GM10248 (cell line): ENCODE measurements at regions of chr1 and their contacts with region 1.

Region 1: GRCh38 chr1:37602750-37603694 is 7.3 kb upstream of the GNL2 start:
- DNase-seq: peak; percentile 72
- CTCF ChIP-seq: peak; percentile 61

Region 2: DNA sequence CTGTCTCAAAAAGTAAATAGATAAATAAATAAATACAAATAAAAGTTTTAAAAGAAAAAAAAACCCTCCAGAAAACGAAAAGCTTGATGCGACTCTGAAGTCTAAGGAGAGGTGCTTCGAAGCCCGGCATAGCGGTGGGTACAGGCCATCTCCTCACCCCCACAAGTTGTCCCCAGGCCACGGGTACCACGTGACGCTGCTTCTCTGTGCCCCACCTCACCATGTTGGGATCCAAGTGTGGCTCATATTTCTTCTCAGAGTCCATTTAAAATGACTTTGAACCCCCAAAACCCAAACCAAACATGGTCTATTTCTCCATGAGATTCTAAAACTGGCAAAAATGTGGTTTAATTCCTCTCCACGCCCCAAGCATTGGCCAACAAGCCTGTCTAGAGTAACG is 161.5 kb before region 1 on chr1:
- CTCF ChIA-PET with region 1: no interaction called
- POLR2A ChIA-PET with region 1: no interaction called
- DNase-seq: no peak
- CTCF ChIP-seq: no peak

Region 3: DNA sequence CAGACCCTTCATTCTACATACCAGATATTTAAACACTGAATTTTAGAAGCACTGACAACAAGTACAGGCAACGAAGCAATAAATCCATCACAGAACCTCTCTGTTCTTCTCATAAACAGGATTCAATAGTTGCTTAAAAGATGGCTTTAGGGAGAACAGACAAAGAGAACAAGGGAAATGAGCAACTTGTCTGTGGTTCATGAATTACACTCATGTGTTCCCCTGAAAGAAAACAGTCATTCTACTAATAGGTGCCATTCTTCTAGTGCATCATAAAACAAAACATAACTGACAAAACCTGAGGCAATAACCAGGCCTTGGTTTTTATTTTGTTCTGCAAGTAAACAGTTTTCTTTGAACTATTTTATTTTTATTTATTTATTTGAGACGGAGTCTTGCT is 14.1 kb before region 1 on chr1:
- CTCF ChIA-PET with region 1: interaction called, 11 read pairs
- POLR2A ChIA-PET with region 1: no interaction called
- DNase-seq: no peak
- CTCF ChIP-seq: no peak

Region 4: GRCh38 chr1:37622131-37622530 is 19.1 kb after region 1 on chr1:
- CTCF ChIA-PET with region 1: interaction called, 26 read pairs
- POLR2A ChIA-PET with region 1: interaction called, 6 read pairs
- DNase-seq: no peak
- CTCF ChIP-seq: no peak

Region 5: DNA sequence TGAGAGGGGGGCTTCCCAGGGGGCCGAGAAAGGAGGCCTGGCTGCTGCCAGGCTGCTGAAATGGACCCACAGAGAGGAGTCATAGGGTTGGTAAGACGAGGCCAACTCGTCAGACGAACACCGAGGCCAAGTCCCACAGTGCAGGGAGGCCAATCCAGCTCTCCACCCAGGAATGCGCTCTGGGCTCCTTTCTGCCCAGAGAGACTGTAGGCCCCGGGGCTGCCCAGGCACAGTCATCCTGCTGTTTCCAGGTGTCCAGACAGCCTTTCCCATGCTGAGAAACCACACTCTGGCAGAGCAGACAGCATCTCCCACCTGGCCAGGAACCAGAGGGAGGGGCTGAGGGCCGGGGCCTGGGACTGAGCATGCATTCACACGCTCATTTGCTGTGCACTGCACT is 58.4 kb after region 1 on chr1:
- CTCF ChIA-PET with region 1: interaction called, 20 read pairs
- POLR2A ChIA-PET with region 1: no interaction called
- DNase-seq: no peak
- CTCF ChIP-seq: no peak

Region 6: GRCh38 chr1:37692078-37692833 is 89.2 kb after region 1 on chr1 and contains the start of gene CDCA8:
- CTCF ChIA-PET with region 1: interaction called, 359 read pairs
- POLR2A ChIA-PET with region 1: no interaction called
- DNase-seq: peak; percentile 98
- CTCF ChIP-seq: peak; percentile 59

Region 7: GRCh38 chr1:37776946-37777516 is 174.0 kb after region 1 on chr1:
- CTCF ChIA-PET with region 1: interaction called, 11 read pairs
- POLR2A ChIA-PET with region 1: no interaction called
- DNase-seq: peak; percentile 42
- CTCF ChIP-seq: no peak

Region 8: GRCh38 chr1:37811027-37811655 is 208.1 kb after region 1 on chr1:
- CTCF ChIA-PET with region 1: no interaction called
- POLR2A ChIA-PET with region 1: no interaction called
- DNase-seq: peak; percentile 71
- CTCF ChIP-seq: peak; percentile 82